H1 (cell line): ENCODE measurements at regions of chr1 and their contacts with region 1.

Region 1: DNA sequence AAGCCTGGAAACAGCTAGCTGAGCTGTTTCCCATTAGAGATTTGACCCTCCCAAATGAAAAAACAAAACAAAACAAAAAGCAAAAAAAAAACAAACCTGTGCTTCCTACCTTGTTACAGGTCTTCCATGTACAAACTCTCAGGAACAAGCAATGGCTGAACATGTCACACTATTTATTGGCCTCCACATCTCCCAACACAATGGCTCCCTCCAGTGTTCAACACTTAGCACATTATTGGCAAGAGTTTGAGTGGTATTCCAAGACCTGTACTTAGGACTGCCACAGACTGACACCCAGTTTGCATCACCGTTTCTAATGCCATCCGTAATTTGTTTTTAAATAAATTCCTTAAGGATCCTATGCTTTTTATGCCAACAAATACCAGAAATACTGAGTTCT is 195.0 kb upstream of the OLFM3 start:
- DNase-seq: no peak
- H3K4me3 ChIP-seq: no peak overlapping the region
- H3K27ac ChIP-seq: no peak overlapping the region
- H3K4me1 ChIP-seq: no peaks in the 10 kb centered on the region
- H3K27me3 ChIP-seq: no peaks in the 10 kb centered on the region
- CTCF ChIP-seq: peak in 2 of 3 experiments; percentile 71 to 73; a peak in 3 of 4 replicates
- EP300 ChIP-seq: no peak
- POLR2A ChIP-seq: no peak
- RAD21 ChIP-seq: peak; percentile 96 to 99

Region 2: GRCh38 chr1:101816262-101816661 is 375.5 kb before region 1 on chr1:
- CTCF ChIA-PET with region 1: interaction called, 16 read pairs
- POLR2A ChIA-PET with region 1: no interaction called
- DNase-seq: no peak
- H3K4me3 ChIP-seq: no peak overlapping the region
- H3K27ac ChIP-seq: no peak overlapping the region
- H3K4me1 ChIP-seq: no peaks in the 10 kb centered on the region
- H3K27me3 ChIP-seq: no peaks in the 10 kb centered on the region
- CTCF ChIP-seq: no peak
- EP300 ChIP-seq: no peak
- POLR2A ChIP-seq: no peak
- RAD21 ChIP-seq: no peak

Region 3: GRCh38 chr1:101996825-101997465 is 194.8 kb before region 1 on chr1 and contains the start of gene OLFM3:
- CTCF ChIA-PET with region 1: interaction called, 15 read pairs
- POLR2A ChIA-PET with region 1: no interaction called
- DNase-seq: peak; percentile 43 to 81
- H3K4me3 ChIP-seq: peak within 1 kb of the TSS; percentile 48 to 70 (median 52); a peak in 7 of 8 replicates
- H3K27ac ChIP-seq: no peak within 1 kb of the TSS
- H3K4me1 ChIP-seq: no peaks in the 10 kb centered on the region
- H3K27me3 ChIP-seq: no peaks in the 10 kb centered on the region
- CTCF ChIP-seq: no peak
- EP300 ChIP-seq: no peak
- POLR2A ChIP-seq: no peak
- RAD21 ChIP-seq: peak; percentile 14 to 36; a peak in 3 of 4 replicates
- total RNA-seq, gene OLFM3: 0.32 and 0.73 TPM in 2 replicates

Region 4: GRCh38 chr1:102071451-102071850 is 120.3 kb before region 1 on chr1:
- CTCF ChIA-PET with region 1: no interaction called
- POLR2A ChIA-PET with region 1: no interaction called
- DNase-seq: no peak
- H3K4me3 ChIP-seq: no peak overlapping the region
- H3K27ac ChIP-seq: no peak overlapping the region
- H3K4me1 ChIP-seq: no peaks in the 10 kb centered on the region
- H3K27me3 ChIP-seq: no peaks in the 10 kb centered on the region
- CTCF ChIP-seq: no peak
- EP300 ChIP-seq: no peak
- POLR2A ChIP-seq: no peak
- RAD21 ChIP-seq: no peak

Region 5: DNA sequence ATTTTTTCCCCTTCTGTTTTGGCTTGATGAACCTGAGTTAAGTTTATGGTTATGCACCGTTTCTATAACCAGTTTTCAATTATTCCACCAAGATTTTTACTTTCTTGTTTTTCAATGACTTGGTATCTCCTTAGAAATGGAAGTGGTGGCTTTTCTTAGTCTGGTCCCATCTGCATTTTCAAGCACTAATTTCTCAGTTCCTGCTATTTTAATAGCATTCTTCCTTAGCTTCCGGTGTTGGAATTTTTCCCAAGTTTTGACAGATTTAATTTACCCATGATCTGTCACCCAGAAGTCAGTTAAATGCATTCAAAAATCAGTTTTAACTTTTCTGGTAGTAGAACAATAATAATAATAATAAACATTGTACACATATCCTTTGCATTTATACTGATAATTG is 10.4 kb before region 1 on chr1:
- CTCF ChIA-PET with region 1: interaction called, 10 read pairs
- POLR2A ChIA-PET with region 1: no interaction called
- DNase-seq: no peak
- H3K4me3 ChIP-seq: no peak overlapping the region
- H3K27ac ChIP-seq: no peak overlapping the region
- H3K4me1 ChIP-seq: no peaks in the 10 kb centered on the region
- H3K27me3 ChIP-seq: no peaks in the 10 kb centered on the region
- CTCF ChIP-seq: no peak
- EP300 ChIP-seq: no peak
- POLR2A ChIP-seq: no peak
- RAD21 ChIP-seq: no peak